CD14-positive monocyte (primary cell): ENCODE measurements at regions of chr10 and their contacts with region 1.

Region 1: GRCh38 chr10:87531908-87532622 is 27.4 kb downstream of the MINPP1 start:
- DNase-seq: no peak
- H3K4me3 ChIP-seq: no peak overlapping the region
- H3K4me3 Mint-ChIP-seq: peak overlapping the region in 1 of 2 donors; percentile 46
- H3K27ac ChIP-seq: peak overlapping the region in 1 of 2 donors; percentile 54
- H3K27ac Mint-ChIP-seq: peak overlapping the region; percentile 26 to 76 (median 45)
- H3K4me1 ChIP-seq: peaks cover 10 to 16% of the 10 kb centered on the region in 2 donors
- H3K4me1 Mint-ChIP-seq: peaks cover 14% of the 10 kb centered on the region
- H3K27me3 ChIP-seq: no peaks in the 10 kb centered on the region
- H3K27me3 Mint-ChIP-seq: peaks cover 0 to 2% (median 0%) of the 10 kb centered on the region in 3 donors
- CTCF ChIP-seq: no peak

Region 2: DNA sequence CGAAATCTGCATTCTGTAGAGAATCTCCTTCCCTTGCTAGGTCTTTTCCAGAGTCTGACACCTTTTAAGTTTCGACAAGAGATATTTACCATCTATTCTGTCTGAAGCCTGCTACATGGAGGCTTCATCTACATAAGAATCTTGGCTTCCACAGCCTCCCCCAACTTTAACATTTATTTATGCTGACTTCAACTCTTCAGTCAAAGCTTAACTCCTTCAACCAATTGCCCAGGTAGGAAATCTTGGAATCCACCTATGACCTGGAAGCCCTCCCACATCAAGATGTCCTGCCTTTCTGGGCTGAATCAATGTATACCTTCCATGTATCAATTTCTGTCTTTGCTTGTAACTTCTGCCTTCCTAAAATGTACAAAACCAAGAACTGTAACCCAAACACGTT is 27.3 kb after region 1 on chr10:
- intact Hi-C with region 1: no loop called
- DNase-seq: no peak
- H3K4me3 ChIP-seq: no peak overlapping the region
- H3K4me3 Mint-ChIP-seq: no peak overlapping the region
- H3K27ac ChIP-seq: no peak overlapping the region
- H3K27ac Mint-ChIP-seq: no peak overlapping the region
- H3K4me1 ChIP-seq: no peaks in the 10 kb centered on the region
- H3K4me1 Mint-ChIP-seq: no peaks in the 10 kb centered on the region
- H3K27me3 ChIP-seq: no peaks in the 10 kb centered on the region
- H3K27me3 Mint-ChIP-seq: peaks cover 0 to 2% (median 2%) of the 10 kb centered on the region in 3 donors
- CTCF ChIP-seq: no peak

Region 3: GRCh38 chr10:87771871-87772500 is 239.9 kb after region 1 on chr10:
- intact Hi-C with region 1: loop called (anchors 5 kb)
- DNase-seq: peak in 2 of 3 donors; percentile 21 to 43
- H3K4me3 ChIP-seq: no peak overlapping the region
- H3K4me3 Mint-ChIP-seq: no peak overlapping the region
- H3K27ac ChIP-seq: no peak overlapping the region
- H3K27ac Mint-ChIP-seq: no peak overlapping the region
- H3K4me1 ChIP-seq: peaks cover 7 to 8% of the 10 kb centered on the region in 2 donors
- H3K4me1 Mint-ChIP-seq: peaks cover 11% of the 10 kb centered on the region
- H3K27me3 ChIP-seq: no peaks in the 10 kb centered on the region
- H3K27me3 Mint-ChIP-seq: no peaks in the 10 kb centered on the region
- CTCF ChIP-seq: peak; percentile 77